H1 (cell line): ENCODE measurements at regions of chr16 and their contacts with region 1.

Region 1: DNA sequence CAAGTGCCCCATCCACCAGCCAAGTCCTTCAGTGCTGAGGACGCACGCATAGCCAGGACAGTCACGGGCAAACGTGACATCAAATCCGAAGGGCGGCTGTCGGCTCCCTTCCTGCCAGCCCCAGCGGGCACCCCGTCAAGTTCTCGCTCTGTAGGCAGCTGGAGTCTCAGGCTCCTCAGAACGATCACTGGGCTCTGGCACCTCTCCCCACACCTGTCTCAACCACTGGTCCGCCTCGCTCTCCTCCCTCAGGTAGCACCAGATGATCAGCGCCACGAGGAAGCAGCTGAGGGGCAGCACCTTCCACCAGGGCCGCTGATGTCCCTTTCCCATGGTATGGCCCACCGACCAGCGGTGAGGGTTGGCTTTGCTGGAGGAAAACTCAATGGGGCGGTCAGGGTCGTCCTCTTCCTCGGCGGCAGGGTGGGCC is 421 bp downstream of the UQCC4 start:
- DNase-seq: no peak
- H3K4me3 ChIP-seq: peak overlapping the region; percentile 87 to 97 (median 93)
- H3K27ac ChIP-seq: peak overlapping the region; percentile 49
- H3K4me1 ChIP-seq: peaks cover 0 to 4% (median 3%) of the 10 kb centered on the region in 4 experiments; a peak in 5 of 7 replicates
- H3K27me3 ChIP-seq: no peaks in the 10 kb centered on the region
- CTCF ChIP-seq: no peak
- EP300 ChIP-seq: no peak
- POLR2A ChIP-seq: no peak
- RAD21 ChIP-seq: no peak

Region 2: GRCh38 chr16:1408171-1408837 is 11.8 kb before region 1 on chr16:
- CTCF ChIA-PET with region 1: interaction called, 3 read pairs
- POLR2A ChIA-PET with region 1: interaction called, 11 read pairs
- DNase-seq: peak; percentile 38 to 99
- H3K4me3 ChIP-seq: peak overlapping the region; percentile 54 to 76 (median 58)
- H3K27ac ChIP-seq: no peak overlapping the region
- H3K4me1 ChIP-seq: no peaks in the 10 kb centered on the region
- H3K27me3 ChIP-seq: no peaks in the 10 kb centered on the region
- CTCF ChIP-seq: no peak
- EP300 ChIP-seq: no peak
- POLR2A ChIP-seq: no peak
- RAD21 ChIP-seq: no peak

Region 3: GRCh38 chr16:1435921-1436697 is 16.0 kb after region 1 on chr16:
- CTCF ChIA-PET with region 1: interaction called, 4 read pairs
- POLR2A ChIA-PET with region 1: interaction called, 18 read pairs
- DNase-seq: no peak
- H3K4me3 ChIP-seq: no peak overlapping the region
- H3K27ac ChIP-seq: no peak overlapping the region
- H3K4me1 ChIP-seq: no peaks in the 10 kb centered on the region; a peak in 1 of 7 replicates
- H3K27me3 ChIP-seq: no peaks in the 10 kb centered on the region
- CTCF ChIP-seq: peak in 2 of 3 experiments; percentile 24 to 26; a peak in 2 of 4 replicates
- EP300 ChIP-seq: no peak
- POLR2A ChIP-seq: no peak
- RAD21 ChIP-seq: peak; percentile 13 to 22; a peak in 1 of 4 replicates

Region 4: DNA sequence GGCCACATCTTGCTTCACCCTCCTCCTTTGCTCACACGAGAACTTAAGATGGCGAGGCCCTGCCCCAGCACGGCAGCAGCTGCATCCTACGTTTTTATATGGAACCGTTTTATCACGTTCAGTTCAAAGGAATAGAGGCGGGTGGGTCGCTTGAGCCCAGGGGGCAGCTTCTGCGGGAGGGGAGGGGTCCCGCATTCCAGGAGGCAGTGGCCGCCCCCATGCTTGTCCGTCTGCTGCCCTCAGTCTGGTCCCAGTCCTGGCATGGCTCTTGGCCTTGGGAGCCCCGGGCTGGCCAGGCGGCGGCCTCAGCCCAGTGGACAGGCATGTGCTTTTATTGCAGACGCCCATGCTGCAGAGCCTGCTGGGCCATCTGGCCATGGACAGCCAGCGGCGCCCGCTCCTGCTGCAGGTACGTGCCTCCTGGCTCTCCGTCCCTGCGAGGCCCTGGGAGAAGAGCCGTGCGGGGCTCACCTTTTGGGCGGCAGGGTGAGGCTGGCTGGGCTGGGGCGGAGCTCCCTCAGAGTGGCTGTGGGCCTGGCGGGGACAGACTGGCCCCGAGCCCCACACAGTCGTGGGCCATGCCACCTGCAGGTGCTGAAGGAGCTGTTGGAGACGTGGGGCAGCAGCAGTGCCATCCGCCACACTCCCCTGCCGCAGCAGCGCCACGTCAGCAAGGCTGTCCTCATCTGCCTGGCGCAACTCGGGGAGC is 79.8 kb after region 1 on chr16:
- CTCF ChIA-PET with region 1: no interaction called
- POLR2A ChIA-PET with region 1: no interaction called
- DNase-seq: no peak
- H3K4me3 ChIP-seq: no peak overlapping the region
- H3K27ac ChIP-seq: no peak overlapping the region
- H3K4me1 ChIP-seq: no peaks in the 10 kb centered on the region
- H3K27me3 ChIP-seq: no peaks in the 10 kb centered on the region
- CTCF ChIP-seq: no peak
- EP300 ChIP-seq: no peak
- POLR2A ChIP-seq: no peak
- RAD21 ChIP-seq: no peak